MCF 10A (cell line): ENCODE measurements at regions of chr5 and their contacts with region 1.

Region 1: GRCh38 chr5:82799361-82800080 is 277.7 kb downstream of the TMEM167A start:
- DNase-seq: no peak
- H3K4me3 Mint-ChIP-seq: no peak overlapping the region
- H3K27ac Mint-ChIP-seq: no peak overlapping the region
- H3K4me1 Mint-ChIP-seq: no peaks in the 10 kb centered on the region
- H3K27me3 Mint-ChIP-seq: no peaks in the 10 kb centered on the region
- CTCF ChIP-seq: no peak

Region 2: GRCh38 chr5:83401122-83401731 is 601.7 kb after region 1 on chr5:
- CTCF ChIA-PET with region 1: interaction called, 3 read pairs
- POLR2A ChIA-PET with region 1: no interaction called
- intact Hi-C with region 1: loop called (anchors 10 kb)
- DNase-seq: no peak
- H3K4me3 Mint-ChIP-seq: no peak overlapping the region
- H3K27ac Mint-ChIP-seq: no peak overlapping the region
- H3K4me1 Mint-ChIP-seq: no peaks in the 10 kb centered on the region
- H3K27me3 Mint-ChIP-seq: no peaks in the 10 kb centered on the region
- CTCF ChIP-seq: no peak